Activated CD4-positive, alpha-beta T cell treated with anti-CD3 and anti-CD28 coated beads for 36 hours (primary cell): ENCODE measurements at regions of chr5 and their contacts with region 1.

Region 1: DNA sequence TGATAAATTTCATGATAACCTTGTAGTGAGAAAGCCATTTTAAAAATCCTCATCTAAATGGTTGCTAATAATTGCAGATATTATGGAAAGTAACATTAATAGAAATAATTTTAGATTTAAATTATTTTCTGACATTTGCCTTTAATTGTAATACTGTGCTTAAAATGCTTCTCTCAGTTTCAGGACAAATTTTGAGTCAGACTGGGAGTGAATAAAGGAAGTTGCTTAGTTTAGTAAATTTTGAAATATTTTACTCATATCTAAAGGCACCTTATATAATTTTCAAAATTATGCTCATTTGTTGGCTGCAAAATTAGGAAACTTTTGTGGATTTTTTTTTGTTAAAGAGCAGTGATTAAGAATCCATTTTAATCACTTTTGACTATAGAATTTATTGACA is 93.8 kb downstream of the CSNK1G3 start:
- DNase-seq: no peak
- ATAC-seq: no peak
- H3K4me3 Mint-ChIP-seq: no peak overlapping the region
- H3K27ac Mint-ChIP-seq: no peak overlapping the region
- H3K4me1 Mint-ChIP-seq: peaks cover 13% of the 10 kb centered on the region
- H3K27me3 Mint-ChIP-seq: no peaks in the 10 kb centered on the region

Region 2: DNA sequence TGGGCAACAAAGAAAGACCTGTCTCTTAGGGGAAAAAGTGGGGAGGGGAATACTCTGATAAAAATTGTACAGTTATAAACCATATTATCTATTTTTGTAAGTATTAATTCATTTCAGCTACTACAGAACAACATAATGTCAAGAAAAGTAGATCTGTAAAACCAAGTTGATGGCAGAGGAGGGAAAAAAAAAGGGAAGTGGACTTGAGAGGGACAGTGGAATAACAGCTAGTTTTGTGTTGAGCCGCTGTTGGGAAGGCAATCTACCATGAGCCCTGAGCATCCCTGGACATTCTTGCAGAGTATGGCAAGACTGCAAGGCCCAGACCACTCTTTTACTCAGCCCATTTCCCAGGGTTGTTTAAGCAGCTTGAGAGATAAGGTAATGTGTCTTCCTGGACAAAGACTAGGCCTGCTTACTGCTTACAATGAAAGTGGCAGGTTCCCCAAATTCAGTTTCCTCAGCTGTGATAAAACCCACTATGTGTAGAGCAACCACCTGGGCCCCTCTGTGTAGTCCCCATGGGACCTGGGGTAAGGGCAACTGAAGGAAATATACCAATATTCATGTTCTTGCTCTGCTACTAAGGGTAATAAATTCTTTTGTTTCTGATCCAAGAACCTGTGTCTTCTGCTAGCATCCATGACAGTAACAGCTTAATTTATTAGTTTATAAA is 207.6 kb before region 1 on chr5:
- CTCF ChIA-PET with region 1: interaction called, 3 read pairs
- POLR2A ChIA-PET with region 1: no interaction called
- intact Hi-C with region 1: loop called in 1 of 2 experiments (anchors 10 kb)
- DNase-seq: no peak
- ATAC-seq: no peak
- H3K4me3 Mint-ChIP-seq: no peak overlapping the region
- H3K27ac Mint-ChIP-seq: no peak overlapping the region
- H3K4me1 Mint-ChIP-seq: no peaks in the 10 kb centered on the region
- H3K27me3 Mint-ChIP-seq: no peaks in the 10 kb centered on the region

Region 3: GRCh38 chr5:123474228-123474627 is 131.6 kb before region 1 on chr5:
- CTCF ChIA-PET with region 1: no interaction called
- POLR2A ChIA-PET with region 1: no interaction called
- intact Hi-C with region 1: no loop called
- DNase-seq: no peak
- ATAC-seq: no peak
- H3K4me3 Mint-ChIP-seq: no peak overlapping the region
- H3K27ac Mint-ChIP-seq: no peak overlapping the region
- H3K4me1 Mint-ChIP-seq: no peaks in the 10 kb centered on the region
- H3K27me3 Mint-ChIP-seq: peaks cover 13% of the 10 kb centered on the region

Region 4: GRCh38 chr5:123690821-123691220 is 85.0 kb after region 1 on chr5:
- CTCF ChIA-PET with region 1: no interaction called
- POLR2A ChIA-PET with region 1: no interaction called
- intact Hi-C with region 1: no loop called
- DNase-seq: no peak
- ATAC-seq: no peak
- H3K4me3 Mint-ChIP-seq: no peak overlapping the region
- H3K27ac Mint-ChIP-seq: no peak overlapping the region
- H3K4me1 Mint-ChIP-seq: no peaks in the 10 kb centered on the region
- H3K27me3 Mint-ChIP-seq: no peaks in the 10 kb centered on the region